Activated T-helper 2 cell treated with anti-CD3 and anti-CD28 coated beads, Interferon-gamma antibody, Interleukin-2, Interleukin-4, amounts not matched to agents 10 μg/mL and 5 μg/mL and 100 μg/mL, durations not matched to agents 14 hours and 24 hours and 36 hours (primary cell): ENCODE measurements at regions of chr6 and their contacts with region 1.

Region 1: GRCh38 chr6:26025894-26026832 is 61.1 kb upstream of the HFE start:
- DNase-seq: peak; percentile 89
- H3K4me3 Mint-ChIP-seq: peak overlapping the region; percentile 75
- H3K27ac Mint-ChIP-seq: peak overlapping the region; percentile 90
- H3K4me1 Mint-ChIP-seq: peaks cover 77% of the 10 kb centered on the region
- H3K27me3 Mint-ChIP-seq: no peaks in the 10 kb centered on the region

Region 2: DNA sequence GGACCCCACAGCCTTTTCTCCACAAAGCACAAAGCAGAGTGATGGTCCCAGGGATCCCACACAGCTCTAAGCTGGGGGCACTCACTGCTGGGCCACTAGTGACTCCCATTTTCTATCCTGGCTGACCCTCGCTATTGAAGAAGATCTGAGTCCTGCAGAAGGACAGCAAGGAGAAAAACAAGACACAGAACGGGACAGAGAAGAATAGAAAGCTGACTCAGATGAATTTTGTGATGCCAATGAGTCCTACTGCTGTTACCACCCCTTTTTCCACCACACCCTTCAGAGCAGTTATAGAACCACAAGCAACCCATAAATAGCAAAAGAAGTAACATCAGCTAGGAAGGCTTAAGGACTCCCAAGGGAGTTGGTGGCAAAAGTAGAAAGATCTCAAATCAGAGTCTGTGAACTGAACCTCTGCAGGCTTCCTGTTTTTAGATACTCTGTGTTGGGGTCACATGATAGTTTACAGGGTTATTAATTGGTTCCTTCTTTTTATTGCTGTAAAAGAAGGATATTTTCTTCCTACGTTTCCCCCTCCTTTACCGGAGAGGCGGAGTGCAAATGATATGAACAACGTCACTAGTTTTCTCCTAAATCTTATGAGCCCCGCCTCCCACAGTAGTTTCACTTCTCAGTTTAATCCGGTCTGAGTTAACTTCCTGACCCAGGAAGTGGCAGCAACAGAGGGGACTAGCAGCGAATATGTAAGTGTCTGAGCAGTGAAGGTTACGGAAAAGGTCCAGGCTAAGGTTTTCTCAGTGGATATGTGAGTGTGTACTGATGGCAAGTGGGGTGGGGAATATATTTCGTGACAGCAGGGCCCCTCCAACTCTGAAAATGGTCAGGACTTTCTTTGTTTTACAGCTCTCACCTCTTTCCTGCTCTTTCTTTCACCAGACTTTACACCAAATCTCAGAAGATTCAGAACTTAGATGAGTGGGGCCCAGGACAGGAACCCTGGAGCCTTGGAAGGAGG is 63.7 kb before region 1 on chr6 and contains the start of gene TRIM38:
- intact Hi-C with region 1: loop called (anchors 2 kb)
- DNase-seq: peak; percentile 77
- H3K4me3 Mint-ChIP-seq: peak within 1 kb of the TSS; percentile 99
- H3K27ac Mint-ChIP-seq: peak within 1 kb of the TSS; percentile 98
- H3K4me1 Mint-ChIP-seq: peaks cover 59% of the 10 kb centered on the region
- H3K27me3 Mint-ChIP-seq: no peaks in the 10 kb centered on the region
- total RNA-seq, gene TRIM38: 29.2 and 29.5 TPM in 2 replicates

Region 3: GRCh38 chr6:26054857-26055669 is 28.9 kb after region 1 on chr6:
- intact Hi-C with region 1: loop called (anchors 1 kb)
- DNase-seq: peak; percentile 85
- H3K4me3 Mint-ChIP-seq: peak overlapping the region; percentile 90
- H3K27ac Mint-ChIP-seq: peak overlapping the region; percentile 99
- H3K4me1 Mint-ChIP-seq: peaks cover 33% of the 10 kb centered on the region
- H3K27me3 Mint-ChIP-seq: no peaks in the 10 kb centered on the region

Region 4: GRCh38 chr6:27138837-27139755 is 1112.9 kb after region 1 on chr6:
- intact Hi-C with region 1: loop called (anchors 2 kb)
- DNase-seq: peak; percentile 76
- H3K4me3 Mint-ChIP-seq: peak overlapping the region; percentile 97
- H3K27ac Mint-ChIP-seq: peak overlapping the region; percentile 99
- H3K4me1 Mint-ChIP-seq: peaks cover 40% of the 10 kb centered on the region
- H3K27me3 Mint-ChIP-seq: no peaks in the 10 kb centered on the region